Ascending aorta (tissue), 2 donors: ENCODE measurements at regions of chr6 and their contacts with region 1.

Region 1: DNA sequence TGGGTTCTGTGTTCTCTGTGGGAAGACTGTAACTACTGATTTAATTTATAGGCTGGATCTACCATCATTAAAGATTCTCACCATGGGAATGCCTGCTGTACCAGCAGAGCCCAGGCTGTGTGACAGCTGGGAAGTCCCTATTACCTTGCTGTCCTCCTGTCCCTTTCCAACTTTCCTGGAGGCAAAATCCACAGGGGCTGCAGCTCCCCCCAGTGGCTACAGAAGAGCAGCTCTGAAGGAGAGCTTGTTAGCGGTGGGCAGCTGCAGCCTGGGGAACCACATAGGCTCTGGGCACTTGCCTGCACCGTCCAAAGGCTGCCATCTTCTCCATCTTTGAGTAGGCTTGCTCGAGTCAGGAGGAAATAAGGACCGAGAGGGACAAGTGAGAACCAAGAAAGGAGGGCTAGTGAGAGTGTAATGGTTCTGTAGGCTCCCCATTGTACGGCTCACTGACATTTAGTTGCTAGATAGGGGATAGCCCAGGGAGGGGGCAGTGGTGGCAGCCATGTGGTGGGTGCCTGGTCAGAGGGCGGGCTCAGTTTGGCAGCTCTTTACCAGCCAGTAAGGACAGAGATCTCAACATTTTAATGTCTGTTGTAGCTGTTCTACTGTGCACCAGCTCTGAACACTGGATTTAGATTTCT is 155.1 kb upstream of the MLIP start:
- DNase-seq: peak in 1 of 2 donors; percentile 81
- H3K4me3 ChIP-seq: no peak overlapping the region
- H3K27ac ChIP-seq: no peak overlapping the region
- H3K4me1 ChIP-seq: no peaks in the 10 kb centered on the region
- H3K27me3 ChIP-seq: no peaks in the 10 kb centered on the region
- CTCF ChIP-seq: peak; percentile 62 to 89 (median 86)

Region 2: DNA sequence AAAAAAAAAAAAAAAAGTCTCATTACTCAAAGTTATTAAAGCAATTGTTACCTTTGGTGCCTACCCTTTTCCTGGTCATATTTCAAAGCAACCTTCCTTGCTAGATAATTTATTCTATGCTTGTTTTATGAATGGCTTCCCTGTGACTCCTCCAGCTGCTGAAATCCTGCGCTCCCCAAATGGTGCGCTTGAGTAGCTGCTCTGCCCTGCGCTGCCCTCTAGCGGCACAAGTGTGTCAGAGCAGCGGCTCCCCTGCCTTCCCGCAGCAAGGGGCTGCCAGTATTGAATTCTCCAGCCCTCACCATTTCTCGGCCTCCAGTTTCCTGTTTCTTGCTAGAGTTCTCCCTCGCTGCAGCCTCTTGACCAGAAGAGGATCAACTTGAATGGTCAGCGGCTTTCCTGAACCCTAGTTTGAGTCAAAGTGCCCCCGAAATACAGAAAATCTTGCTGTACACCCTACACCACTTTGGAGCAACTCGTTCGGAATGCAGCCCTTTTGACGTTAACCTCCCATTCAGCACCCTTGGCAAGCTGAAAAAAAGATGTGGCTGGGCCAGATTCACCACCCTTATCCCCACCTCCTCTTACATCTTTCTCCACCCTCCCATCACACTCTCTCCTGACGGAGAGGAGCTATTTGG is 230.3 kb before region 1 on chr6:
- intact Hi-C with region 1: loop called (anchors 2 kb)
- DNase-seq: peak in 1 of 2 donors; percentile 84
- H3K4me3 ChIP-seq: no peak overlapping the region
- H3K27ac ChIP-seq: no peak overlapping the region
- H3K4me1 ChIP-seq: no peaks in the 10 kb centered on the region
- H3K27me3 ChIP-seq: no peaks in the 10 kb centered on the region
- CTCF ChIP-seq: peak; percentile 76 to 97 (median 95)

Region 3: GRCh38 chr6:53894091-53894490 is 62.1 kb before region 1 on chr6:
- intact Hi-C with region 1: loop called (anchors 10 kb)
- DNase-seq: no peak
- H3K4me3 ChIP-seq: no peak overlapping the region
- H3K27ac ChIP-seq: no peak overlapping the region
- H3K4me1 ChIP-seq: peaks cover 0 to 5% of the 10 kb centered on the region in 2 donors
- H3K27me3 ChIP-seq: no peaks in the 10 kb centered on the region
- CTCF ChIP-seq: no peak

Region 4: GRCh38 chr6:54646069-54646950 is 690.1 kb after region 1 on chr6:
- intact Hi-C with region 1: no loop called
- DNase-seq: no peak
- H3K4me3 ChIP-seq: no peak overlapping the region
- H3K27ac ChIP-seq: peak overlapping the region; percentile 78 to 79
- H3K4me1 ChIP-seq: peaks cover 5 to 7% of the 10 kb centered on the region in 2 donors
- H3K27me3 ChIP-seq: no peaks in the 10 kb centered on the region
- CTCF ChIP-seq: no peak